ENCODE measurements at regions of chr5 and their contacts with region 1.

Region 1: GRCh38 chr5:177599731-177600507 is at the start of gene B4GALT7:
- DNase-seq: peak; percentile 73
- H3K4me3 ChIP-seq: peak within 1 kb of the TSS; percentile 68 to 86 (median 80)
- H3K27ac ChIP-seq: peak within 1 kb of the TSS; percentile 69
- H3K4me1 ChIP-seq: peaks cover 9% of the 10 kb centered on the region
- H3K27me3 ChIP-seq: no peaks in the 10 kb centered on the region
- CTCF ChIP-seq: peak in 1 of 2 donors; percentile 4
- total RNA-seq, gene B4GALT7: 33.1 to 38.8 TPM

Region 2: DNA sequence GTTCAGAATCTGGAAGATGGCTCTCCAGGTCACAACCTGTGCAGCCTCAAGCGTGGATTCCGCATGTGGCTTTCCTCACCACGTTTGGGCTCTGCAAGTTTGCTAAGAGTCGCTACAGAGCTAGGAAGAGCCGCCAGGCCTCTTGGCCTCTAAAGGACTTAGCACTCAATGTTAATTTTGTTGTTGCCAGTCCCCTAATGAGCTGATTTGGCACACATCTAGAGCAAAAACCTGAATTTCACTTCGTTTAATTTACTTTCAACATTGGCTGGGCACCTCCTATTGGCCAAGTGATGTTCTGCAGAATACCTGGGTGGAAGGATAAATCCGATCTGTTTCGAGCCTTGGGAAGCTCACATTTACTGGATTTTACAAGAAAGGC is 855.3 kb before region 1 on chr5:
- CTCF ChIA-PET with region 1: no interaction called
- dilution Hi-C with region 1: no loop called
- in situ Hi-C with region 1: no loop called
- intact Hi-C with region 1: no loop called
- DNase-seq: no peak
- H3K4me3 ChIP-seq: no peak overlapping the region
- H3K27ac ChIP-seq: no peak overlapping the region
- H3K4me1 ChIP-seq: peaks cover 6% of the 10 kb centered on the region
- H3K27me3 ChIP-seq: peaks cover 21% of the 10 kb centered on the region
- CTCF ChIP-seq: peak; percentile 28

Region 3: GRCh38 chr5:177554474-177555111 is 45.3 kb before region 1 on chr5 and contains the start of gene FAM193B:
- CTCF ChIA-PET with region 1: no interaction called
- dilution Hi-C with region 1: loop called (anchors 5 kb)
- in situ Hi-C with region 1: no loop called
- intact Hi-C with region 1: no loop called
- DNase-seq: peak; percentile 86
- H3K4me3 ChIP-seq: peak within 1 kb of the TSS; percentile 80 to 96 (median 84)
- H3K27ac ChIP-seq: peak within 1 kb of the TSS; percentile 25
- H3K4me1 ChIP-seq: peaks cover 15% of the 10 kb centered on the region
- H3K27me3 ChIP-seq: no peaks in the 10 kb centered on the region
- CTCF ChIP-seq: peak; percentile 16 to 41
- total RNA-seq, gene FAM193B: 30.7 to 63.3 TPM

Region 4: DNA sequence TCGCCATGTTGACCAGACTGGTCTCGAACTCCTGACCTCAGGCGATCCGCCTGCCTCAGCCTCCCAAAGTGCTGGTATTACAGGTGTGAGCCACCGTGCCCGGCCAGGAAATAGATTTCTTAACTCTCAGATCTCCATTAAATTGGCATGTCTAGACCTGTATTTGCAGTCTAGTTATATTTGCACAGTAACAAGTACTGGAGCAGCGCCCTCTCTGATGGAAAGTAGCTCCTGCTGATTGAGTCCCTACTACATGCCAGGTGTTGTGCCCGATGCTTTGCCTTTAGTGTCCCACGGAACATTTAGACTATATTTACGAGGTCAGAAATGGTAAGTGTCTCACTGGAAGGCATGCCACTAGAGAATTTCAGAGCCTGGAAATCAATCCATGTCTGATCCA is 23.8 kb before region 1 on chr5:
- CTCF ChIA-PET with region 1: no interaction called
- dilution Hi-C with region 1: no loop called
- in situ Hi-C with region 1: no loop called
- intact Hi-C with region 1: no loop called
- DNase-seq: peak; percentile 12
- H3K4me3 ChIP-seq: no peak overlapping the region
- H3K27ac ChIP-seq: no peak overlapping the region
- H3K4me1 ChIP-seq: peaks cover 10% of the 10 kb centered on the region
- H3K27me3 ChIP-seq: no peaks in the 10 kb centered on the region
- CTCF ChIP-seq: no peak

Region 5: DNA sequence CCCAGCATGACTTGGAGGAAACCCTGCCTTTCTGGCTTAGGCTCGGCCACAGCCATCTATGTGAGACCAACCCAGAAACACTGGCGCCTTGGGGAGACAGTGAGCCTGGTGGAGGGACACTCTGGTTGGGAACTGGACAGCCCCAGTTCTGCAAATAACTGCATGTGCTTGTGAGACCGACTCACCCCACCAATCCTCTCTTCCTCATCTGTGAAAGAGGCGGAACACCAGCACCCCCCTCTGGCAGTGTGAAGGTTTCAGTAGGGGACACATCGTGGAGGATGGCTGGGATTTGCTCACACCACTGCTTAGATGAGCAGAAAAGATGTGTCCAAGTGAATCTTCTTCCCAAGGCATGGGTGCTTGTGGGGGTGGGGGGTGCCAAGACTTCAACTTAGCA is 470.0 kb after region 1 on chr5:
- CTCF ChIA-PET with region 1: no interaction called
- dilution Hi-C with region 1: no loop called
- in situ Hi-C with region 1: loop called (anchors 25 kb)
- intact Hi-C with region 1: no loop called
- DNase-seq: peak; percentile 28
- H3K4me3 ChIP-seq: no peak overlapping the region
- H3K27ac ChIP-seq: no peak overlapping the region
- H3K4me1 ChIP-seq: no peaks in the 10 kb centered on the region
- H3K27me3 ChIP-seq: peaks cover 3% of the 10 kb centered on the region
- CTCF ChIP-seq: peak; percentile 29 to 45